ENCODE measurements at regions of chr9 and their contacts with region 1.

Region 1: GRCh38 chr9:37119907-37120842 is at the start of gene ZCCHC7:
- DNase-seq: peak; percentile 93 to 98 (median 97)
- ATAC-seq: peak; percentile 95 to 97 (median 96)
- H3K4me3 ChIP-seq: peak within 1 kb of the TSS; percentile 83 to 85
- H3K4me3 Mint-ChIP-seq: peak within 1 kb of the TSS; percentile 86 to 97 (median 90)
- H3K27ac ChIP-seq: peak within 1 kb of the TSS; percentile 79
- H3K27ac Mint-ChIP-seq: peak within 1 kb of the TSS; percentile 98 to 99
- H3K4me1 ChIP-seq: peaks cover 7 to 20% of the 10 kb centered on the region in 2 experiments
- H3K4me1 Mint-ChIP-seq: peaks cover 37 to 42% (median 37%) of the 10 kb centered on the region in 3 donors
- H3K27me3 ChIP-seq: no peaks in the 10 kb centered on the region
- H3K27me3 Mint-ChIP-seq: no peaks in the 10 kb centered on the region
- total RNA-seq, gene ZCCHC7: 29.1 to 44.2 (median 33.5) TPM

Region 2: DNA sequence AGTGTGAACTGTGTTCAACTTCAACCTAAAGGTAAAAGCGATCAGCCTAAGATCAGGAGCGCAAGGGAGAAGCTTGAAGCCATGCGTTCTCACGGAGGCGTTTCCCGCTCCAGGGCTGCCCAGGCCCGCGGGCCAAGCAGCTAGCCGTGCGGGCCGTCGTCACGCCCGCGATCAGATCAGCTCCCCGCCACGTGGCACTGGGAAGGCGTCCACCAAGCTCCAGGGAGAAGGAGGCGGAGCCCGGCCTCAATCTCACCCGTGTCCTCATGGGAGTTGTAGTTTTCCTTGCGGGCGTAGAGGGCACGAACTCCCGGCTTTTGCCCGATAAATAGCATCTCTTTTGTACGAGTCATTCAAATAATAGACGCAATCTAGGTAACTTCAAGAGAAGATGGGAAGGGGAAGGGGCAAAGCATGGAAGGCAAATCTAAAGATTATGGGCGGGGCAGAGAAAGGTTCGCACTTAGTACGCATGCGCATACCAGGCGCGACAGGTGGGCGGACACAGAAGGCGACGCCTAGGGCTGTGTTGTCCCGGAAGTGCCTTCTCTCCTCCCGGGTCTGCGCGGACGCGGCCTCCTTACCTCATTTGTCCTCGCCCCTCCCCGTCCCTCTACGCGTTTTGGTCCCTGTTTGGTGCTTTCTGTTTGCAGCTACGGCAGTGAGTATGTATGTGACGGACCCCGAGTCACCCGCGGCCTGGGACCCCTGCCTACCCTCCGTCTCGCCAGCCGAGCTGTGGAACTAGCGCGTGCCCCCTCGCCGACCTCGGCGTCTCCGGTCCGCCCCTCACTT is 40.6 kb before region 1 on chr9:
- CTCF ChIA-PET with region 1: interaction called, 5 to 11 read pairs
- POLR2A ChIA-PET with region 1: interaction called, 3 to 14 read pairs
- DNase-seq: peak; percentile 78 to 96 (median 92)
- ATAC-seq: peak; percentile 96 to 98 (median 96)
- H3K4me3 ChIP-seq: peak overlapping the region; percentile 75 to 90
- H3K4me3 Mint-ChIP-seq: peak overlapping the region; percentile 86 to 96 (median 96)
- H3K27ac ChIP-seq: peak overlapping the region; percentile 71
- H3K27ac Mint-ChIP-seq: peak overlapping the region; percentile 97
- H3K4me1 ChIP-seq: peaks cover 19% of the 10 kb centered on the region in 2 experiments
- H3K4me1 Mint-ChIP-seq: peaks cover 52 to 58% (median 54%) of the 10 kb centered on the region in 3 donors
- H3K27me3 ChIP-seq: no peaks in the 10 kb centered on the region
- H3K27me3 Mint-ChIP-seq: peaks cover 3 to 5% of the 10 kb centered on the region in 2 donors

Measured in T-cell (primary cell).